ENCODE measurements at regions of chr18 and their contacts with region 1.

Region 1: DNA sequence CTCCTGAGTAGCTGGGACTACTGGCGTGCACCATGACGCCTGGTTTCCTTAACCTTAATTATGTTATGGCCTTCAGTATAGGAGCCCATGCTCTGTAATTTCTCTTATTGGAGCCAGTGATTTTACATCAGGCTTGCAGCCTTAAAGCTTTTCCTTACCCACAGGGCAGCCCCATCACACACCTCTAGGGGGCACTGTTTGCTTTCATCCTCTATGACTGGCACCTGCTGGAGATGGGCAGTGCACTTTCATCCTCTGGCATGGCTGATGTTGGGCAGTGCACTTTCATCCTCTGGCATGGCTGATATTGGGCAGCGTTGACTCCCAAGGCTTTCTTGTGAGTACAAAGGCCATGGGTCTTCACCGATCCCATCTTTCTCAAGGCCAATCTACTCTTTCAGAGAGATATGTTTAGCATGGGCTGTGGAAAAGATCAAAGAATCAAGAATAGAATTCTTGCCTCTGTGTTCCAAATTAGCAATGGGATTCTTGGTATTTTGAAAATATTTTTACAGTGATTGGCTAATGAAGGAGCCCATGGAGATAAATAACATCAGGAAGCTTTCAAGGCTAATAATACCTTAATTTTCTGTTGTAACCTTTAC is 80.7 kb upstream of the MEX3C start:
- DNase-seq: no peak
- ATAC-seq: peak in 2 of 8 donors; percentile 42 to 44
- H3K4me3 ChIP-seq: no peak overlapping the region
- H3K27ac ChIP-seq: no peak overlapping the region
- H3K4me1 ChIP-seq: peaks cover 0 to 7% (median 5%) of the 10 kb centered on the region in 9 donors
- H3K27me3 ChIP-seq: no peaks in the 10 kb centered on the region
- CTCF ChIP-seq: peak; percentile 8 to 63 (median 51)

Region 2: GRCh38 chr18:51361130-51361860 is 83.1 kb after region 1 on chr18:
- intact Hi-C with region 1: no loop called
- DNase-seq: peak in 1 of 2 donors; percentile 13
- ATAC-seq: peak; percentile 33 to 96 (median 88)
- H3K4me3 ChIP-seq: no peak overlapping the region
- H3K27ac ChIP-seq: peak overlapping the region in 9 of 10 donors; percentile 36 to 70 (median 60)
- H3K4me1 ChIP-seq: peaks cover 0 to 18% (median 12%) of the 10 kb centered on the region in 9 donors
- H3K27me3 ChIP-seq: no peaks in the 10 kb centered on the region
- CTCF ChIP-seq: no peak

Region 3: DNA sequence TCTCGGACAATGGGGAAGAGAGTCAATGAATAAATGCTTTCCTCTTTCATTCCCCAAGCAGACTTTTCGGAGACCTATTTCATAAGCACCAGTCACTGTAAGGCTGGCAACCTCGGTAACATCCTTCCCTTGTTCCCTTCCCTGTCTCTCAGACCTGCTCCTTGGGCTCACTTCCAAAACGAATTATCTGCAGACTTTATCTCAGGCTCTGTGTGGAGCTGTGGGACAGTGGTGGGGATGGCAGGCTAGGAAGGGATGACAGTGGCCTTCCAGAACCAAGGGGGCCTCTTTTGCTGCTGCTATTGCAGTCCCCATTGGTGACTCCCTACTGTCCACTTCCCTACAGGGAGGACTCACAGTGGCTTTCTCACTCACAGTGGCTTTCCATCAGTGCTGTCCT is 105.0 kb after region 1 on chr18:
- intact Hi-C with region 1: loop called in 2 of 10 experiments (anchors 5 to 10 kb)
- DNase-seq: no peak
- ATAC-seq: no peak
- H3K4me3 ChIP-seq: no peak overlapping the region
- H3K27ac ChIP-seq: no peak overlapping the region
- H3K4me1 ChIP-seq: no peaks in the 10 kb centered on the region
- H3K27me3 ChIP-seq: no peaks in the 10 kb centered on the region
- CTCF ChIP-seq: no peak

Region 4: DNA sequence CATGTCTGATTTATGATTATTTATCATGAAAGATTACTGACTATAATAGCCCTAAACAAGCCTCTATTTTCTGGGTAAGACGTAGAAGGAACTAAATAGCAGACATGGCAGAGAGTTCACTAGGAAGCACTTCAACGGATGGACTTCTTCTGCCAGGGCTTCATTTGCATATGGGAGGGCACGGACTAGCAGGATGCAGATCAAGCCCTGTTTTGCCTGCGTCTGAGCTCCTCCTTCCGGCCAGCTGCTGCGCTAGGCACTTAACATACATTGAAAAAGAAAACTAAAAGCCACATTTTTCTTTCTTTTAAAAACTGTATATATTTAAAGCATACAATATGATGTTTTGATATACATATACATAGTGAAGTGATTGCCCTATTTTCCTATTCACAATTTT is 259.3 kb after region 1 on chr18:
- intact Hi-C with region 1: loop called in 1 of 10 experiments (anchors 10 kb)
- DNase-seq: peak; percentile 17 to 36
- ATAC-seq: peak in 5 of 8 donors; percentile 75 to 88 (median 77)
- H3K4me3 ChIP-seq: no peak overlapping the region
- H3K27ac ChIP-seq: no peak overlapping the region
- H3K4me1 ChIP-seq: no peaks in the 10 kb centered on the region
- H3K27me3 ChIP-seq: no peaks in the 10 kb centered on the region
- CTCF ChIP-seq: peak in 7 of 9 donors; percentile 24 to 60 (median 43)